PC-9 (cell line): ENCODE measurements at regions of chr3 and their contacts with region 1.

Region 1: GRCh38 chr3:163056874-163057497 is 1560.4 kb downstream of the OTOL1 start:
- DNase-seq: peak in 1 of 2 experiments; percentile 39
- H3K4me3 ChIP-seq: no peak overlapping the region
- H3K27ac ChIP-seq: no peak overlapping the region
- H3K4me1 ChIP-seq: no peaks in the 10 kb centered on the region
- H3K27me3 ChIP-seq: no peaks in the 10 kb centered on the region
- CTCF ChIP-seq: peak; percentile 78

Region 2: GRCh38 chr3:161560008-161560637 is 1496.9 kb before region 1 on chr3:
- CTCF ChIA-PET with region 1: no interaction called
- POLR2A ChIA-PET with region 1: no interaction called
- intact Hi-C with region 1: loop called (anchors 10 kb)
- DNase-seq: peak in 1 of 2 experiments; percentile 46
- H3K4me3 ChIP-seq: no peak overlapping the region
- H3K27ac ChIP-seq: no peak overlapping the region
- H3K4me1 ChIP-seq: no peaks in the 10 kb centered on the region
- H3K27me3 ChIP-seq: no peaks in the 10 kb centered on the region
- CTCF ChIP-seq: peak; percentile 61

Region 3: GRCh38 chr3:162719684-162720341 is 337.2 kb before region 1 on chr3:
- CTCF ChIA-PET with region 1: no interaction called
- POLR2A ChIA-PET with region 1: no interaction called
- intact Hi-C with region 1: no loop called
- DNase-seq: peak; percentile 10 to 66
- H3K4me3 ChIP-seq: no peak overlapping the region
- H3K27ac ChIP-seq: no peak overlapping the region
- H3K4me1 ChIP-seq: no peaks in the 10 kb centered on the region
- H3K27me3 ChIP-seq: no peaks in the 10 kb centered on the region
- CTCF ChIP-seq: no peak

Region 4: GRCh38 chr3:163071697-163072096 is 14.7 kb after region 1 on chr3:
- CTCF ChIA-PET with region 1: no interaction called
- POLR2A ChIA-PET with region 1: no interaction called
- intact Hi-C with region 1: no loop called
- DNase-seq: peak in 1 of 2 experiments; percentile 22
- H3K4me3 ChIP-seq: no peak overlapping the region
- H3K27ac ChIP-seq: no peak overlapping the region
- H3K4me1 ChIP-seq: no peaks in the 10 kb centered on the region
- H3K27me3 ChIP-seq: no peaks in the 10 kb centered on the region
- CTCF ChIP-seq: no peak